ENCODE measurements at regions of chr5 and their contacts with region 1.

Region 1: DNA sequence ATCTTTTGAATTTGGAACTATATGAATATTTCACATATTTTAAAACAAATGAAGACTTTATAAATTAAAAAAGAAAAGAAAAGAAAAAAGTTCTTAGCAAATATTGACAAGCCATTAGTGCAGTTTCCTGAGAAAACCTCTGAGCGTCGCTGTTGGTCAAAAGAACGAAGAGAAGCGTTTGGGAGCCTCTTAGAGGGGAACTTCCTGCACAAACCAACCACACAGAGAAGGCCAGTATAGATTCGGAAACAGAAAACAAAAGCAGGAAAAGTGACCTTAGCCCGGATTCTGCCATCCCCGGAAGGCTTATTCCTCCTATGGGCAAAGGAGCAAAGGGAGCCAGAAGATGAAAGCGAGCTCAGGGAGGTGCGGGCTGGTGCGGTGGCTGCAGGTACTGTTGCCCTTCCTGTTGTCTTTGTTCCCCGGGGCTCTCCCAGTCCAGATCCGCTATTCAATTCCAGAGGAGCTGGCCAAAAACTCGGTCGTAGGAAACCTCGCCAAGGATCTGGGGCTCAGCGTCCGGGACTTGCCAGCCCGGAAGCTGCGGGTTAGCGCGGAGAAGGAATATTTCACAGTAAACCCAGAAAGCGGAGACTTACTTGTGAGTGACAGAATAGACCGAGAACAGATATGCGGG is at the start of gene PCDHGB2:
- DNase-seq: peak in 1 of 9 donors; percentile 22
- ATAC-seq: peak; percentile 54
- H3K4me3 ChIP-seq: peak within 1 kb of the TSS; percentile 43
- H3K4me3 Mint-ChIP-seq: peak within 1 kb of the TSS; percentile 33 to 87 (median 78)
- H3K27ac ChIP-seq: no peak within 1 kb of the TSS
- H3K27ac Mint-ChIP-seq: peak within 1 kb of the TSS in 3 of 9 donors; percentile 48 to 57 (median 56)
- H3K4me1 ChIP-seq: no peaks in the 10 kb centered on the region
- H3K4me1 Mint-ChIP-seq: peaks cover 0 to 6% (median 3%) of the 10 kb centered on the region in 7 donors
- H3K27me3 ChIP-seq: peaks cover 5 to 19% of the 10 kb centered on the region in 2 donors
- H3K27me3 Mint-ChIP-seq: peaks cover 37 to 90% (median 87%) of the 10 kb centered on the region in 5 donors
- total RNA-seq, gene PCDHGB2: 0.24 to 1.3 (median 0.36) TPM in 4 of 5 experiments, not detected in the other

Region 2: GRCh38 chr5:141234109-141234667 is 125.7 kb before region 1 on chr5:
- CTCF ChIA-PET with region 1: no interaction called
- POLR2A ChIA-PET with region 1: no interaction called
- intact Hi-C with region 1: loop called in 1 of 2 experiments (anchors 10 kb)
- DNase-seq: no peak
- ATAC-seq: no peak
- H3K4me3 ChIP-seq: no peak overlapping the region
- H3K4me3 Mint-ChIP-seq: peak overlapping the region in 1 of 10 donors; percentile 13
- H3K27ac ChIP-seq: no peak overlapping the region
- H3K27ac Mint-ChIP-seq: no peak overlapping the region
- H3K4me1 ChIP-seq: no peaks in the 10 kb centered on the region
- H3K4me1 Mint-ChIP-seq: no peaks in the 10 kb centered on the region
- H3K27me3 ChIP-seq: peaks cover 0 to 4% of the 10 kb centered on the region in 2 donors
- H3K27me3 Mint-ChIP-seq: peaks cover 7 to 50% (median 41%) of the 10 kb centered on the region in 5 donors

Region 3: DNA sequence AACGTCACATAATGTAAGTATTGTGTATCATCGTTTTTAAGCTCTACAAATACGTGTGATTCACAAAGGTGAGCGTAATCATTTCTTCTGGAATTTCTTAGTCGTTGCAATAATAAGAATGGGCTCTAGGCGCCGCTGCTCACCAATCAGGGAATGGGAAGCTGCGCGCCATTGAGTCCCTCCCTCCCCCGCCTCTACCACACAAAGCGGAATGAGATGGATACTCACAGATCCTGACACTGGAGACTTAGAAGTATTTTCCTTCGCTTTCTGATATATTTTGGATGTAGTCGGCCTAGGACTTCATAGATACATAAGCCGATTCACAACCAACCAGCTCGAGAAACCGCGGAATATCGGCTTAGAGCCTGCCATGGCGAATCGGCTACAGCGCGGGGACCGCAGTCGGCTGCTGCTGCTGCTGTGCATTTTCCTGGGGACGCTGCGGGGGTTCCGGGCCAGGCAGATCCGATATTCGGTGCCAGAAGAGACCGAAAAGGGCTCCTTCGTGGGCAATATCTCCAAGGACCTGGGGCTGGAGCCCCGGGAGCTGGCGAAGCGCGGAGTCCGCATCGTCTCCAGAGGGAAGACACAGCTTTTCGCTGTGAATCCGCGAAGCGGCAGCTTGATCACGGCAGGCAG is 61.1 kb after region 1 on chr5 and contains the start of gene PCDHGA11:
- CTCF ChIA-PET with region 1: no interaction called
- POLR2A ChIA-PET with region 1: no interaction called
- intact Hi-C with region 1: loop called in 1 of 2 experiments (anchors 5 kb)
- DNase-seq: peak in 3 of 9 donors; percentile 25 to 28 (median 26)
- ATAC-seq: peak; percentile 70
- H3K4me3 ChIP-seq: no peak within 1 kb of the TSS
- H3K4me3 Mint-ChIP-seq: peak within 1 kb of the TSS; percentile 52 to 90 (median 77)
- H3K27ac ChIP-seq: no peak within 1 kb of the TSS
- H3K27ac Mint-ChIP-seq: peak within 1 kb of the TSS in 7 of 9 donors; percentile 51 to 73 (median 64)
- H3K4me1 ChIP-seq: no peaks in the 10 kb centered on the region
- H3K4me1 Mint-ChIP-seq: peaks cover 0 to 19% (median 7%) of the 10 kb centered on the region in 7 donors
- H3K27me3 ChIP-seq: peaks cover 8 to 33% of the 10 kb centered on the region in 2 donors
- H3K27me3 Mint-ChIP-seq: peaks cover 68 to 87% (median 78%) of the 10 kb centered on the region in 5 donors
- total RNA-seq, gene PCDHGA11: 0.16 to 0.29 (median 0.21) TPM in 4 of 5 experiments, not detected in the other

Measured in naive thymus-derived CD4-positive, alpha-beta T cell (primary cell).